CD4-positive, alpha-beta T cell (primary cell): ENCODE measurements at regions of chrX and their contacts with region 1.

Region 1: GRCh38 chrX:121579016-121579760 is 531.8 kb downstream of the GLUD2 start:
- DNase-seq: peak in 3 of 14 experiments; percentile 3 to 8 (median 4)
- ATAC-seq: no peak
- H3K4me3 ChIP-seq: no peak overlapping the region
- H3K4me3 Mint-ChIP-seq: no peak overlapping the region
- H3K27ac ChIP-seq: no peak overlapping the region
- H3K27ac Mint-ChIP-seq: no peak overlapping the region
- H3K4me1 ChIP-seq: no peaks in the 10 kb centered on the region
- H3K4me1 Mint-ChIP-seq: no peaks in the 10 kb centered on the region
- H3K27me3 ChIP-seq: no peaks in the 10 kb centered on the region
- H3K27me3 Mint-ChIP-seq: no peaks in the 10 kb centered on the region
- CTCF ChIP-seq: peak; percentile 24

Region 2: GRCh38 chrX:120781403-120781802 is 797.8 kb before region 1 on chrX:
- CTCF ChIA-PET with region 1: no interaction called
- POLR2A ChIA-PET with region 1: no interaction called
- intact Hi-C with region 1: loop called in 1 of 2 experiments (anchors 10 kb)
- DNase-seq: no peak
- ATAC-seq: no peak
- H3K4me3 ChIP-seq: no peak overlapping the region
- H3K4me3 Mint-ChIP-seq: no peak overlapping the region
- H3K27ac ChIP-seq: no peak overlapping the region
- H3K27ac Mint-ChIP-seq: no peak overlapping the region
- H3K4me1 ChIP-seq: no peaks in the 10 kb centered on the region
- H3K4me1 Mint-ChIP-seq: no peaks in the 10 kb centered on the region
- H3K27me3 ChIP-seq: no peaks in the 10 kb centered on the region
- H3K27me3 Mint-ChIP-seq: no peaks in the 10 kb centered on the region
- CTCF ChIP-seq: no peak

Region 3: DNA sequence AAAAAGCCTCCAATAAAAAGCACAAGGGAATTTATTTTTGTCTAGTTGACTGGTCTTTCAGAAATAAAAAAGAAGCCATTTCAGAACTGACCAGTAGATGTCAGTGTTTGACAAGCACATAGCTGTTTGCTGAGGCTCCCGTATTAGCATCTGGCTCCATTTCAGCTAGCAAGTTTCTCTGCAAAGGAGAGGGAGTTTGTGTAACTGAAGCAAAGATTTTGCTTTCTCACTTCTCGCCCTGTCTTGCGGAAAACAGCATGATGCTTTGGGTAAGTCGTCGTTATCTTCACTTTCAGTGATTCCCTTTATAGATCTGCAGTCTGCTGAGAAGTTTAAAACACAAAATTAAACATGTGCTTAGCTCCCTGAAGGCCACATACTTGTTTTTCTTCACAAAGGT is 789.1 kb before region 1 on chrX:
- CTCF ChIA-PET with region 1: no interaction called
- POLR2A ChIA-PET with region 1: no interaction called
- intact Hi-C with region 1: loop called (anchors 2 to 10 kb)
- DNase-seq: peak in 8 of 14 experiments; percentile 1 to 73 (median 18)
- ATAC-seq: peak; percentile 69
- H3K4me3 ChIP-seq: no peak overlapping the region
- H3K4me3 Mint-ChIP-seq: peak overlapping the region; percentile 52
- H3K27ac ChIP-seq: no peak overlapping the region
- H3K27ac Mint-ChIP-seq: peak overlapping the region; percentile 42
- H3K4me1 ChIP-seq: peaks cover 2% of the 10 kb centered on the region
- H3K4me1 Mint-ChIP-seq: peaks cover 17% of the 10 kb centered on the region
- H3K27me3 ChIP-seq: no peaks in the 10 kb centered on the region
- H3K27me3 Mint-ChIP-seq: no peaks in the 10 kb centered on the region
- CTCF ChIP-seq: peak; percentile 64